ENCODE measurements at regions of chr15 and their contacts with region 1.

Region 1: GRCh38 chr15:73873889-73874511 is 636 bp downstream of the TBC1D21 start:
- DNase-seq: no peak
- H3K4me3 ChIP-seq: no peak overlapping the region
- H3K27ac ChIP-seq: no peak overlapping the region
- H3K4me1 ChIP-seq: no peaks in the 10 kb centered on the region
- H3K27me3 ChIP-seq: peaks cover 0 to 3% (median 0%) of the 10 kb centered on the region in 4 experiments; a peak in 1 of 7 replicates
- CTCF ChIP-seq: peak in 2 of 3 experiments; percentile 61 to 69; a peak in 3 of 4 replicates
- EP300 ChIP-seq: no peak
- POLR2A ChIP-seq: no peak
- RAD21 ChIP-seq: peak; percentile 64 to 74

Region 2: GRCh38 chr15:73809733-73810501 is 64.1 kb before region 1 on chr15:
- CTCF ChIA-PET with region 1: interaction called, 12 read pairs
- POLR2A ChIA-PET with region 1: no interaction called
- DNase-seq: no peak
- H3K4me3 ChIP-seq: no peak overlapping the region
- H3K27ac ChIP-seq: no peak overlapping the region
- H3K4me1 ChIP-seq: no peaks in the 10 kb centered on the region; a peak in 2 of 7 replicates
- H3K27me3 ChIP-seq: no peaks in the 10 kb centered on the region; a peak in 1 of 7 replicates
- CTCF ChIP-seq: no peak
- EP300 ChIP-seq: no peak
- POLR2A ChIP-seq: no peak
- RAD21 ChIP-seq: no peak

Region 3: DNA sequence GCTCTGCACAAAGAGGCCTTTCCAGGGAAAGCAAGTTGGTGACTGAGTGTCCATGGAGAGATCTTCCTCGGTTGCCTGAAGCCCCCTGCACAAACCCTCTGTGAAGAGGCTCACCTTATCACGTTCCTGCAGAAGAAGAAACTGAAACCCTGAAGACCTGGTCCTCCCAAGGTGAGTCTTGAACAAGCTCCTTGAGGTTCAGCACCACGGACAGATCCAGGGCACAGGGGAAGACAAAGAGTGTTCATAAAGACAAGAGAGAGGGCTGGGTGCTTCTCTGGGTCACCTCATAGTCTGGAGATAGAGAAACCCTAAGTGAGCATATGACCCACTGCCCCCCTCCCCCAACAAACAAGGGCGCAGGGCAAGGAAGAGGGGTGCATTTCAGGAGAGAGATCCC is 22.3 kb before region 1 on chr15:
- CTCF ChIA-PET with region 1: interaction called, 36 read pairs
- POLR2A ChIA-PET with region 1: no interaction called
- DNase-seq: peak; percentile 50 to 82
- H3K4me3 ChIP-seq: no peak overlapping the region
- H3K27ac ChIP-seq: no peak overlapping the region
- H3K4me1 ChIP-seq: peaks cover 0 to 2% (median 0%) of the 10 kb centered on the region in 4 experiments; a peak in 2 of 7 replicates
- H3K27me3 ChIP-seq: no peaks in the 10 kb centered on the region; a peak in 2 of 7 replicates
- CTCF ChIP-seq: no peak
- EP300 ChIP-seq: no peak
- POLR2A ChIP-seq: no peak
- RAD21 ChIP-seq: 0 out of 4 replicates have a peak, but pooled peaks of 1 of the 2 experiments have one; percentile 12

Region 4: GRCh38 chr15:73885954-73886700 is 12.1 kb after region 1 on chr15:
- CTCF ChIA-PET with region 1: interaction called, 19 read pairs
- POLR2A ChIA-PET with region 1: no interaction called
- DNase-seq: no peak
- H3K4me3 ChIP-seq: no peak overlapping the region
- H3K27ac ChIP-seq: no peak overlapping the region
- H3K4me1 ChIP-seq: no peaks in the 10 kb centered on the region; a peak in 1 of 7 replicates
- H3K27me3 ChIP-seq: no peaks in the 10 kb centered on the region; a peak in 1 of 7 replicates
- CTCF ChIP-seq: no peak
- EP300 ChIP-seq: no peak
- POLR2A ChIP-seq: no peak
- RAD21 ChIP-seq: no peak

Region 5: DNA sequence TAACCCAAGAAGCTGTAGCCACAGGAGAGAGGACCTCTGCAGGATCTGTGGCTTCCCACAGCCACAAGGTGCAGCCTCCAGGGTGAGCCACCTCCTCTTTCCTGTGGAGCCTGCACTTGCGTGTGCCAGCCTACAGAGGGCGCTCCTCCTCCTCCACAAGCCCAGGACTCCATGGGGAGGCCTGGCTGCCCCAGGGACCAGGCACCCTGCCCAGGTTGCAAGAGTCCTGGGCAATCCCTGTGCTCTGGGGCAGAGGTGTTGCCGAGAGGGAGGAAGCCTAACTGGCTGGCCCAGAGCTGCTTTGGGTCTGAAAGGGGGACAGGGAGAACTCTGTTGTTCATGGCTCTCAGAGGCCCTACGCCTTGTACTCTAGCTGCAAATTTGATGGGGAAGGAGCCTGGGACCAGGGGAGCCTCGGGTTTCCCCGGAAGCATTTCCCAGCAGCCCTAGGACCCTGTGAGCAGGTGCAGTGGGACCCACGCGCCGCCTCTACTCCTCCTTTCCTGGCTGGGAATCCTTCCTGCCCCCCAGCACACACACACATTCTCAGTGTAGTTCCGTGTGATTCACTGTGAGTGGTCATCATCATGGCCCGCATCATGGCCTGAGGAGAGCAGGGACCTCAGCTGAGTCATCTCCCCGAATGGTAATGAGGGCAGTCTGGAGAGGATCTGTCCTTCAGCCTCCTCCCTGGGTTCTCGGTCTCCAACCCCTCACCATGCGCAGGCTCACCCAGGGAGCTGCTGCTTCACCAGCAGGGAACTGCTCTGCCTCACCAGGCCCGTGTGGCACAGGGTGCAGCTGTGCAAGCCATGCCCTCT is 23.7 kb after region 1 on chr15:
- CTCF ChIA-PET with region 1: interaction called, 39 read pairs
- POLR2A ChIA-PET with region 1: no interaction called
- DNase-seq: peak; percentile 44 to 85
- H3K4me3 ChIP-seq: no peak overlapping the region
- H3K27ac ChIP-seq: no peak overlapping the region
- H3K4me1 ChIP-seq: peaks cover 0 to 3% (median 1%) of the 10 kb centered on the region in 4 experiments; a peak in 3 of 7 replicates
- H3K27me3 ChIP-seq: no peaks in the 10 kb centered on the region
- CTCF ChIP-seq: peak; percentile 99 to 100 (median 100)
- EP300 ChIP-seq: no peak
- POLR2A ChIP-seq: no peak
- RAD21 ChIP-seq: peak; percentile 88 to 90

Region 6: GRCh38 chr15:73914145-73914544 is 40.1 kb after region 1 on chr15:
- CTCF ChIA-PET with region 1: interaction called, 113 read pairs
- POLR2A ChIA-PET with region 1: no interaction called
- DNase-seq: no peak
- H3K4me3 ChIP-seq: no peak overlapping the region
- H3K27ac ChIP-seq: no peak overlapping the region
- H3K4me1 ChIP-seq: peaks cover 0 to 5% (median 0%) of the 10 kb centered on the region in 4 experiments; a peak in 1 of 7 replicates
- H3K27me3 ChIP-seq: no peaks in the 10 kb centered on the region
- CTCF ChIP-seq: no peak
- EP300 ChIP-seq: no peak
- POLR2A ChIP-seq: no peak
- RAD21 ChIP-seq: no peak